K562 (cell line): ENCODE measurements at regions of chr12 and their contacts with region 1.

Region 1: GRCh38 chr12:54285150-54286041 is 4.9 kb downstream of the HNRNPA1 start:
- DNase-seq: peak in 1 of 4 experiments; percentile 10
- ATAC-seq: peak; percentile 0; the same call in 1 of the 3 replicates
- H3K4me3 ChIP-seq: peak overlapping the region; percentile 71
- H3K27ac ChIP-seq: peak overlapping the region; percentile 75
- H3K4me1 ChIP-seq: peaks cover 22 to 31% of the 10 kb centered on the region in 2 experiments; a peak in 4 of 5 replicates
- H3K27me3 ChIP-seq: no peaks in the 10 kb centered on the region
- CTCF ChIP-seq: peak in 1 of 3 experiments; percentile 33; a peak in 2 of 6 replicates
- EP300 ChIP-seq: no peak
- POLR2A ChIP-seq: peak; percentile 12
- RAD21 ChIP-seq: peak; percentile 20 to 29; a peak in 2 of 4 replicates

Region 2: GRCh38 chr12:54173066-54173726 is 112.2 kb before region 1 on chr12:
- CTCF ChIA-PET with region 1: no interaction called
- POLR2A ChIA-PET with region 1: no interaction called
- in situ Hi-C with region 1: no loop called
- intact Hi-C with region 1: no loop called
- DNase-seq: peak in 2 of 4 experiments; percentile 38 to 39
- ATAC-seq: peak; percentile 43
- H3K4me3 ChIP-seq: peak overlapping the region; percentile 21; the same call in 1 of the 2 replicates
- H3K27ac ChIP-seq: no peak overlapping the region
- H3K4me1 ChIP-seq: peaks cover 12 to 15% of the 10 kb centered on the region in 2 experiments; a peak in 4 of 5 replicates
- H3K27me3 ChIP-seq: peaks cover 24 to 31% of the 10 kb centered on the region in 2 experiments
- CTCF ChIP-seq: no peak
- EP300 ChIP-seq: no peak
- POLR2A ChIP-seq: no peak
- RAD21 ChIP-seq: no peak

Region 3: GRCh38 chr12:54259194-54260011 is 26.0 kb before region 1 on chr12:
- CTCF ChIA-PET with region 1: no interaction called
- POLR2A ChIA-PET with region 1: interaction called, 58 read pairs
- in situ Hi-C with region 1: no loop called
- intact Hi-C with region 1: loop called (anchors 1 kb)
- DNase-seq: peak; percentile 92 to 95 (median 92)
- ATAC-seq: peak; percentile 87
- H3K4me3 ChIP-seq: peak overlapping the region; percentile 38
- H3K27ac ChIP-seq: peak overlapping the region; percentile 79
- H3K4me1 ChIP-seq: peaks cover 27 to 39% of the 10 kb centered on the region in 2 experiments
- H3K27me3 ChIP-seq: no peaks in the 10 kb centered on the region
- CTCF ChIP-seq: no peak
- EP300 ChIP-seq: no peak; the same call in none of the 2 replicates
- POLR2A ChIP-seq: peak; percentile 71
- RAD21 ChIP-seq: no peak

Region 4: DNA sequence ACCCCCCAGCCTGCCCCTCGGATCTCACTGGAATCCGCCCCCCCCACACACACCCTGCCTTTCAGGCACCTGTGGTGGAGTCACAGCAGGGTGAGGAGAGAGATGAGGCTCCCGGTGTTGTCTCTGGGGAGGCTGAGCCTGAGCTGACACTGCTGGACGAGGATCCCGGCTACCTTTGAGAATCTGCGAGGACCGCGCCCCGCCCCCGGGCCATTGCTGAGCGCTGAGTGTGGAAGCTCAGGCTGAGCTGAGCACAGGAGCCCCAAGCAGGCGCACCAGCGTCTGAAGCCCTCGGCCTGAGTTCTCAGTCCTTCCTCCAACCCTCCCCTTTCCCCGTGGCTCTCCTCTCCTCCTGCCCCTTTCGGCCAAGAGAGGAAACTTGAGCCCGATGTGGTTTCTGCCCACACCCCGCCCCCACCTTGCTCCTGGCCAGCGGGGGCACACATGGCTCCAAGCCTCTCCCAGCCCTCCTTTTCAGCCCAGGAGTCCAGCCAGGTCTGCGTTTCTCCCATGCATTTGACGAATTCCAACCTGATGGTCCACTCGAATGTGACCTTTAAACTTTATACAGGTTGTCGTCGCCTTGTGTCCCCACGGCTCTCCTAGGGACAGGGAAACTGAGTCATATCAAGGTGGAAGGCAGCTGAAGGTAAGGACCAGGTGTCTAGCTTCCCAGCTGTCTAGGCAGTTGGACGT is 15.5 kb after region 1 on chr12 and contains the start of gene NFE2:
- CTCF ChIA-PET with region 1: no interaction called
- POLR2A ChIA-PET with region 1: interaction called, 155 read pairs
- in situ Hi-C with region 1: no loop called
- intact Hi-C with region 1: no loop called
- DNase-seq: peak; percentile 70 to 94 (median 74)
- ATAC-seq: peak; percentile 81
- H3K4me3 ChIP-seq: peak within 1 kb of the TSS; percentile 78
- H3K27ac ChIP-seq: peak within 1 kb of the TSS; percentile 88
- H3K4me1 ChIP-seq: peaks cover 29 to 35% of the 10 kb centered on the region in 2 experiments
- H3K27me3 ChIP-seq: no peaks in the 10 kb centered on the region
- CTCF ChIP-seq: peak; percentile 40 to 45 (median 41); a peak in 5 of 6 replicates
- EP300 ChIP-seq: 0 out of 2 replicates have a peak, but pooled peaks have one; percentile 18
- POLR2A ChIP-seq: peak; percentile 93
- RAD21 ChIP-seq: peak in 1 of 2 experiments; percentile 35; a peak in 1 of 4 replicates
- polyA plus RNA-seq, gene NFE2: 12.3 to 44.5 TPM

Region 5: GRCh38 chr12:54324617-54325441 is 39.4 kb after region 1 on chr12 and contains the start of gene COPZ1:
- CTCF ChIA-PET with region 1: interaction called, 5 read pairs
- POLR2A ChIA-PET with region 1: interaction called, 47 read pairs
- in situ Hi-C with region 1: loop called (anchors 5 kb)
- intact Hi-C with region 1: loop called (anchors 1 kb)
- DNase-seq: peak; percentile 89 to 99 (median 93)
- ATAC-seq: peak; percentile 90
- H3K4me3 ChIP-seq: peak within 1 kb of the TSS; percentile 70
- H3K27ac ChIP-seq: peak within 1 kb of the TSS; percentile 96
- H3K4me1 ChIP-seq: peaks cover 31 to 44% of the 10 kb centered on the region in 2 experiments; a peak in 4 of 5 replicates
- H3K27me3 ChIP-seq: no peaks in the 10 kb centered on the region
- CTCF ChIP-seq: peak; percentile 84 to 98 (median 87)
- EP300 ChIP-seq: peak; percentile 67
- POLR2A ChIP-seq: peak; percentile 97
- RAD21 ChIP-seq: peak; percentile 91 to 94
- polyA plus RNA-seq, gene COPZ1: 437 to 487 TPM